Ascending aorta (tissue), 2 donors: ENCODE measurements at regions of chr7 and their contacts with region 1.

Region 1: DNA sequence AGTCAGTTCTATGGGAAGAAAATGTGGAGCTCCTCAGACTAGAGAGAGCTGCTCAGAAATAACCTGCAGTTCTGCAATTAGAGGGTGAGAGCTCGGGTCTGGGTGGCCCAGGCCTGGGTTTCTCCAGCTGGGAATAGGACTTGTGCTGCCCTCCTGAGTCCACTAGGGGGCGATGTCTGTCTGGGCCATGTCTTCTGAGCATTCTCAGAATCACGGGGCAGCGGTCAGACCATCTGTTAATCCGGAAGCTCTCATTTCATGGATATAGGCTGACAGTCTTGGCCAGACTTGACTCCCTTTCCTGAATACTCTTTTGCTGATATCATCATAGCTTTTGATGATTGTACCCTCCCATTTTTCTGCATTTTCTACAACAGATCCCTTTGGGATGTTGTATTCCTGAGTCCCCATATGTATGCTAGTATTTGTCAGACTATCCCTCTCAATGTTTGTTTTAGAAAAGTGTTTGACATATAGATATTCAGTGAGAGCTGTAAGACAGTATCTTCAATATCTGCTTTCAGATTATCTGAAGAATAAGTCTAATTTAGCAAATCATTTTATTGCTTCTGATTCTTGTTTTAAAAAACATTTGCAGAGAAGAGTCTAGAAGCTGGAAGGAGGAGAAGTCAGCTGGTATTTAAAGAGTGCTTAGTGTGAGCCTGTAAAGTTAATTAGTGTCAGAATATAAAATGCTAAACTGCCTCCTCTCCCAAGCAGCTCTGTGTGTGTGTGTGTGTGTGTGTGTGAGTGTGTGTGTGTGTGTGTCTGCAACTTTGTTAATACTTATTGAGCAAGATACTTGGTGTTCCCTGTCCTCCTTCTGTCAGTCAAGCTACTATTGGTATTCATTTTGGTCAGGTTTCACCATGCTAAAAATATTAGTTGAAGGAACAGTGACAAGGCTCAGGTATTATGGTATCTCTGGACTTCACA is 38.0 kb downstream of the STARD3NL start:
- DNase-seq: peak; percentile 51 to 87
- H3K4me3 ChIP-seq: no peak overlapping the region
- H3K27ac ChIP-seq: peak overlapping the region in 1 of 2 donors; percentile 50
- H3K4me1 ChIP-seq: peaks cover 0 to 2% of the 10 kb centered on the region in 2 donors
- H3K27me3 ChIP-seq: no peaks in the 10 kb centered on the region
- CTCF ChIP-seq: peak; percentile 86 to 91 (median 89)

Region 2: DNA sequence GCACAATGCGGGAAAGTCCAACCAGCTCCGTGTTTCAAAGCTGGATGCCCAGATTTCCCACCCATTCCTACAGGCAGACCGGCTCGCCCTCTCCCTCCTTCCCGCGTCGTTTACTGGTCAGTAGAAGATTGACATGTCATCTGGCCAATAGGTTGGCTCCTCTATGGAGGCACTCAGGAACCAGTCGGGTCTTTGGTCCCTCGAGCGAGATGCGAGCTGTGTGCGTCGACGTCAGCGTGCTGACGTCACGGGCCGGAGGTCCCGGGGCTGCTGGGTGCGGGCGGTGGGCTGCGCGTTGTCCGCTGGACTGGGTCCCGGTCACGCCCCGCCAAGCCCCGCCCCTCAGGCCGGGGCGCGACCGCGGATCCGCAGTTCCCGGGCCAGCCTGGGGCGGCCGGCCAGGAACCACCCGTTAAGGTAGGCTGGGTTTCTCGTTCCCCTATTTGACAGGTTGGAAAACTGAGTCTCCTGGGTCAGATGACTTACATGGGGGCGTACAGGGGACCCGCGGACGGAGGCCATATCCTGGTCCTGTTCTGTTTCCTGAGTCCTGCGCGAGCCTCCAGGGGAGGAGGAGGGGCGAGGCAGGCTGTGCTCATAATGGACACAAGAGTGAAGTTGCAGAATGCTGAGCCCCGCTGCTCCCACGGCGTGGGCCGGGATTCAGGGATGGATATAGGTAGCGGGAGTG is 37.9 kb before region 1 on chr7 and contains the start of gene STARD3NL:
- intact Hi-C with region 1: loop called (anchors 2 kb)
- DNase-seq: peak; percentile 99
- H3K4me3 ChIP-seq: peak within 1 kb of the TSS; percentile 62 to 86
- H3K27ac ChIP-seq: peak within 1 kb of the TSS; percentile 90 to 94
- H3K4me1 ChIP-seq: peaks cover 6% of the 10 kb centered on the region in 2 donors
- H3K27me3 ChIP-seq: no peaks in the 10 kb centered on the region
- CTCF ChIP-seq: peak in 1 of 3 experiments; percentile 24
- total RNA-seq, gene STARD3NL: 19.7 TPM